Dendritic cell treated with granulocyte-macrophage colony-stimulating factor and Interleukin-4, amounts not matched to agents 40 ng/mL and 50 ng/mL, for 4 days (primary cell): ENCODE measurements at regions of chr20 and their contacts with region 1.

Region 1: DNA sequence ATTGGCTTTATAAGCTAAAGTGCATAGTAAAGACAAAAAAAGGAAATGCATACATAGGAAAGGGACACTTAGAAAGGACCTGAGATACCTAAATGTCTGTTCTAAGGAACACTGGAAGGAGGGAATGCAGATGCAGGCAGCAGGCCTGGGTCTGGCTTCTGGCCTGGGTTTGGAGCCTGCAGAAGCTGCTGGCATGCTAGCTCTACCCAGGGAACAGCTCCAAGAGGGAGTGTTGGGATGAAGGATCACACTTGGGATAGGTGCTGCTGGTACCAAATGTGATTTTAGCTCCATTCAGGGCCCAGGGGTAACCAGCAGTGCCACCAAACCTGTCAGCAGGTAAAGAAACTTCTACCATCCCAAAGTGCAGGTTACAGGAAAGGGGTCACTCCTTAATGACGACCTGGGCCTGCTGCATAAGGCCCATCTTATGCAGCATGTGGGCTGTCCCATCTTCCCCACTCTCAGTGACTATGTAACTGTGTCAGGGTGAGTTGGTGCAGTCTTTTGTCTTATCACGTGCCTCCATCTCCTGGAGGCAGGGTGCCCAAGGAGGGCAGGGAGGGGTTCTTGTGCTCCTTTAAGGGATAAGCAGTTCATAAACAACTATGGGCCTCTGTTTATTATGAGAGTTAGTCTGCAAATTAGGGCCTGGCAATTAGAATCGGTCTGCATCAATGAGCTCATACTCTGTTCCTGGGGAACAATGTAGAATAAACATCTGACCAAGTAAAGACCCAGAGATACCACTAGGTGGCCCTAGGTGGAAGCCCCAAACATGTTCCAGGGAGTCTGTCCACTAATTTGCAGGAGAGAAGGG is 26.9 kb downstream of the DDX27 start:
- H3K4me3 Mint-ChIP-seq: no peak overlapping the region
- H3K27ac Mint-ChIP-seq: no peak overlapping the region
- H3K4me1 Mint-ChIP-seq: peaks cover 8% of the 10 kb centered on the region
- H3K27me3 Mint-ChIP-seq: no peaks in the 10 kb centered on the region

Region 2: GRCh38 chr20:48999890-49000870 is 246.0 kb before region 1 on chr20:
- intact Hi-C with region 1: loop called (anchors 10 kb)
- H3K4me3 Mint-ChIP-seq: no peak overlapping the region
- H3K27ac Mint-ChIP-seq: no peak overlapping the region
- H3K4me1 Mint-ChIP-seq: no peaks in the 10 kb centered on the region
- H3K27me3 Mint-ChIP-seq: no peaks in the 10 kb centered on the region